ENCODE measurements at regions of chr16 and their contacts with region 1.

Region 1: GRCh38 chr16:13919683-13920509 is at the start of gene ERCC4:
- DNase-seq: peak; percentile 100
- H3K4me3 ChIP-seq: peak within 1 kb of the TSS; percentile 63
- H3K27ac ChIP-seq: peak within 1 kb of the TSS; percentile 34
- H3K4me1 ChIP-seq: peaks cover 5% of the 10 kb centered on the region
- H3K27me3 ChIP-seq: no peaks in the 10 kb centered on the region
- CTCF ChIP-seq: peak; percentile 82
- total RNA-seq, gene ERCC4: 8.0 to 9.7 TPM

Region 2: GRCh38 chr16:13680021-13680889 is 239.6 kb before region 1 on chr16:
- intact Hi-C with region 1: no loop called
- DNase-seq: no peak
- H3K4me3 ChIP-seq: no peak overlapping the region
- H3K27ac ChIP-seq: no peak overlapping the region
- H3K4me1 ChIP-seq: no peaks in the 10 kb centered on the region
- H3K27me3 ChIP-seq: no peaks in the 10 kb centered on the region
- CTCF ChIP-seq: no peak

Region 3: GRCh38 chr16:14070877-14071575 is 151.1 kb after region 1 on chr16 and contains the start of gene MRTFB:
- intact Hi-C with region 1: loop called (anchors 10 kb)
- DNase-seq: peak; percentile 88
- H3K4me3 ChIP-seq: peak within 1 kb of the TSS; percentile 95
- H3K27ac ChIP-seq: peak within 1 kb of the TSS; percentile 58
- H3K4me1 ChIP-seq: no peaks in the 10 kb centered on the region
- H3K27me3 ChIP-seq: no peaks in the 10 kb centered on the region
- CTCF ChIP-seq: no peak
- total RNA-seq, gene MRTFB: 31.4 to 40.3 TPM

Region 4: GRCh38 chr16:14249291-14250032 is 329.6 kb after region 1 on chr16:
- intact Hi-C with region 1: loop called (anchors 5 kb)
- DNase-seq: peak; percentile 45
- H3K4me3 ChIP-seq: no peak overlapping the region
- H3K27ac ChIP-seq: no peak overlapping the region
- H3K4me1 ChIP-seq: no peaks in the 10 kb centered on the region
- H3K27me3 ChIP-seq: no peaks in the 10 kb centered on the region
- CTCF ChIP-seq: peak; percentile 78

Region 5: DNA sequence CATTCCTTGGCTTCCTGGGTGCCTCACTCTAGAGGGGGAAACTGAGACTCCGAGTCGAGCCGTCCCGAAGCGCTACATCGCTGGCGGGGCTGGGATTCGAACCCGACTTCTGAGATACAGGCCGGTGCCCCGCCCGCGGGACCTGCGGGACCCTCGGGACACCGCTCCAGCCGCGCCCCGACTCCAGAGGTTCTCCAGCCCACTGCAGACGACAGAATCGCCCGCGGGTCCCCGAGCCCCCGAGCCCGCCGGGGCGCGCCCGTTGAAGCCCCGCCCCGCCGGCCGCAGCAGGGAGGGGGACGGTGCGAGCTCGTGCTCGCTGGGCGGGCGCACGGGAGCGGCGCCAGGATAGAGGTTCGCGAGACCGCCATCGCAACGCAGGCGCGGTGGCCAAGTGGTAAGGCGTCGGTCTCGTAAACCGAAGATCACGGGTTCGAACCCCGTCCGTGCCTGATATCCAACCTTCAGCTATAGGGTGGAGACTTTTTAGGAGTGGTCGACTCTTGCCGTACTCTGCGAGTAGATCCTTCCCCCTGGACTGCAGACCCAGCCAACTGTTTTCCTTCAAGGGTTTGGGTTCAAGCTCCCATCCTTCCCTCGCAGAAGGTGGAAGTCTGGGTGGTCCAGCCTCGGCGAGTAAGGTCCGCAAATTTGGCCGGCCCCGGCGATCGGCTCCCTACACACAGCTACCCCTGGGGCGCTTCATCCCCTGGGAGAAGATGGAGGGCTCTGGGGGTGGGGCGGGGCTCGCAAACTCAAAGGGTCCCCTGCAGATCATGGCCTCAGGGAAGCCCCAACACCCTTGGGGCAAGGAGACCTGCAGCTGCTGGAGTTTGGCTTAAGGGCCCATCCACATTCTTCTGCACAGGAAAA is 365.9 kb after region 1 on chr16:
- intact Hi-C with region 1: loop called (anchors 5 kb)
- DNase-seq: peak; percentile 94
- H3K4me3 ChIP-seq: peak overlapping the region; percentile 83
- H3K27ac ChIP-seq: peak overlapping the region; percentile 86
- H3K4me1 ChIP-seq: peaks cover 4% of the 10 kb centered on the region
- H3K27me3 ChIP-seq: no peaks in the 10 kb centered on the region
- CTCF ChIP-seq: no peak

Region 6: GRCh38 chr16:14529010-14529669 is 609.2 kb after region 1 on chr16:
- intact Hi-C with region 1: loop called (anchors 5 kb)
- DNase-seq: peak; percentile 78
- H3K4me3 ChIP-seq: no peak overlapping the region
- H3K27ac ChIP-seq: no peak overlapping the region
- H3K4me1 ChIP-seq: no peaks in the 10 kb centered on the region
- H3K27me3 ChIP-seq: no peaks in the 10 kb centered on the region
- CTCF ChIP-seq: peak; percentile 62

Measured in colonic mucosa (tissue), 4 donors.